ENCODE measurements at regions of chr22 and their contacts with region 1.

Region 1: DNA sequence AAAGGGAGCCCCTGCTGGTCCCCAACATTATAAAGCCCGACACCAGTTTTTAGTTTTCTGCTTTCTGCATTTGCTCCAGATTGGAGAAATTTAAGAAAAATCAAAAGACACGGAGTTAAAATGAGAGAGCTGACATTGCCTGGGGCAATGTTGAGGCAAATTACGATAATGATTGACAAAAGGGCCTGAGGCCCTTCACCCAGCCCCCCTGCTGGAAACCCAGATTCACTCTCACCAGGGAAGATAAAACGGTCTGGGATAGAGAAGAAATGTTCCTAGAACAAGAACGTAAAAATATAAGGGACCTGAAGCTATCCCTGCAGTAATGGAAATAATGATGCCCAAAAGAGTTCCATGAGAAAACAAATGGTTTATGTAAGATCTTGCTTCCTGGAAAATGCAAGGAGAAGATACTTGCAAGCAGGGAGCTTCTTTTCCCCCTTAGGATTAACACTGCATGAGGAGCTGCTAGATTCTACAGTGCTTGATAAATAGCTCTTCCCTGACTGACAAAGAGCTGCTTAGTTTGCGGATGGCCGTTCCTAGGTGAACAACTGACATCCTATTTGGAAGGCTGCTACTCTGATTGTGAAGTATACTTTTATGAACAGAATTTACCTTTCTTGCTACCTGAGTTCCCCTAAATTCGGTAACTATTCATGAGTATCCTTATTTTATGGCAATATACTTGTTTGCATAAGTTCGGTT is 40.6 kb upstream of the GNAZ start:
- DNase-seq: no peak
- H3K4me3 ChIP-seq: no peak overlapping the region
- H3K27ac ChIP-seq: no peak overlapping the region
- H3K4me1 ChIP-seq: no peaks in the 10 kb centered on the region
- H3K27me3 ChIP-seq: no peaks in the 10 kb centered on the region
- CTCF ChIP-seq: no peak
- POLR2A ChIP-seq: no peak

Region 2: DNA sequence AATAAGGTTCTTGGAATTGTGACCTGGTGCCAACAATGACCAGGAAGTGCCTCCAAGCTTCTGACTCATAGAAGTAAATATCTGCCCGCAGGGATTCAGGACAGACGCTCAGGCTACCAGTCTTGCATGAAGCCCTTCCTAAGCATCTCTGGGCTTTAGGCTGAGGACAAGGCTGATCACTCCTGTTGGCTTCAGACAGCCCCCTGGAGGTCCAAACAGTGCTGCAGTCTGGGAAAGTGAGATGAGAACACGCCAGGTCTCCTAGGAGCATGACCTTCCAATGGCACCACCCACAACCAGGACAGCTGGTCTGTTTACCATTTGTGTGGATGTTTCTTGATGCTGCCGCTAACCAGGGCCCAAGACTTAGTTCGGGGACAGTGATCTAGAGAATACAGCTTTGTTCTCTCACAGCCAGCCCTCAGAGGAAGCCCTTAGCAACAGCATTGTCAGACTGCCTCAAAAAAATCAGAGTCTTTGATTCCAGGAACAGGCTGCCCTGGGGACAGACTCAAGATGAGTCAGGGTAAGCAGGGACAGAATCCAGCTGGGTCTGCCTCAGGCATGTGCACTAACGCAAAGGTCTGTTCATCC is 632.3 kb before region 1 on chr22:
- intact Hi-C with region 1: no loop called
- DNase-seq: peak; percentile 69 to 72
- H3K4me3 ChIP-seq: no peak overlapping the region
- H3K27ac ChIP-seq: peak overlapping the region; percentile 89 to 94
- H3K4me1 ChIP-seq: no peaks in the 10 kb centered on the region
- H3K27me3 ChIP-seq: no peaks in the 10 kb centered on the region
- CTCF ChIP-seq: no peak
- POLR2A ChIP-seq: no peak

Region 3: GRCh38 chr22:23085785-23086184 is 56.1 kb after region 1 on chr22:
- intact Hi-C with region 1: loop called (anchors 2 kb)
- DNase-seq: no peak
- H3K4me3 ChIP-seq: no peak overlapping the region
- H3K27ac ChIP-seq: no peak overlapping the region
- H3K4me1 ChIP-seq: no peaks in the 10 kb centered on the region
- H3K27me3 ChIP-seq: no peaks in the 10 kb centered on the region
- CTCF ChIP-seq: no peak
- POLR2A ChIP-seq: no peak

Region 4: GRCh38 chr22:24810043-24810749 is 1780.5 kb after region 1 on chr22:
- intact Hi-C with region 1: no loop called
- DNase-seq: peak in 1 of 2 donors; percentile 29
- H3K4me3 ChIP-seq: no peak overlapping the region
- H3K27ac ChIP-seq: peak overlapping the region; percentile 17 to 32
- H3K4me1 ChIP-seq: no peaks in the 10 kb centered on the region
- H3K27me3 ChIP-seq: no peaks in the 10 kb centered on the region
- CTCF ChIP-seq: no peak
- POLR2A ChIP-seq: no peak

Measured in breast epithelium (tissue), 4 donors.